Sciatic nerve (tissue), 2 donors: ENCODE measurements at regions of chr7 and their contacts with region 1.

Region 1: GRCh38 chr7:27916369-27916768 is 176.4 kb downstream of the TAX1BP1 start:
- DNase-seq: no peak
- ATAC-seq: no peak

Region 2: DNA sequence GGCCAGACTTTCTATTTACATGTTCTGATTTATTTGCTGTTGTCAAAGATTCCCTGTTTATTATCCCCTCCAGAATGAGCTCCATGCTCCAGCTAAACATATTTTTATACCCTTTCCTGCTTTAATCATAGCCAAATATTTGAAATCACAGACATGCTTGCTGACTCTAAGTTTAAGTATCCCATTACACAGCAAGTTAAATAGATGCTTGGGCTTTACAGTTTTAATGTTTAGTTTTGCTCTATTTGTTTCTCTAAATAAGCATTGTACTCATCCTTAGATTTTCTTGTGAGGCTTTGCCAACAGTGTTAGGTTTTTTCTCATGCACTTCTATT is 20.4 kb after region 1 on chr7:
- intact Hi-C with region 1: loop called (anchors 1 kb)
- DNase-seq: no peak
- ATAC-seq: no peak

Region 3: DNA sequence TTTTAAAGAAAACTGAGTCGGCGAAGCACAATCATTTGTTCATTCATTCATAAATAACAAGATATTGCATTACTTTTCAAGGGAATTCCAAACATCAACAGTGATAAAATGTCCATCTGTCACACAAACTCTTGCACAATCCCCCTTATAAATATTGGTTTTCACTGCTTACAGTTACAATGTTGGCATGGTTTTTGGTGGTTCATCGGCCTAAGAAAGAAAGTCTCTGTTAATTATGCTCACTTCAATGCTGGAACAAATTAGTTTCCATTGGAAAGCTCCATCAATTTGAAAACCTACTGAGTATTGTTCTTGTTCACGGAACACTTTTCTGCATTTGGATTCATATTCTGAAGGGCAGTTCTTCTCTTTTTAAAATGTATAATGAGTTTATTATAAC is 75.7 kb after region 1 on chr7:
- intact Hi-C with region 1: no loop called
- DNase-seq: no peak
- ATAC-seq: peak; percentile 83